ENCODE measurements at regions of chr16 and their contacts with region 1.

Region 1: DNA sequence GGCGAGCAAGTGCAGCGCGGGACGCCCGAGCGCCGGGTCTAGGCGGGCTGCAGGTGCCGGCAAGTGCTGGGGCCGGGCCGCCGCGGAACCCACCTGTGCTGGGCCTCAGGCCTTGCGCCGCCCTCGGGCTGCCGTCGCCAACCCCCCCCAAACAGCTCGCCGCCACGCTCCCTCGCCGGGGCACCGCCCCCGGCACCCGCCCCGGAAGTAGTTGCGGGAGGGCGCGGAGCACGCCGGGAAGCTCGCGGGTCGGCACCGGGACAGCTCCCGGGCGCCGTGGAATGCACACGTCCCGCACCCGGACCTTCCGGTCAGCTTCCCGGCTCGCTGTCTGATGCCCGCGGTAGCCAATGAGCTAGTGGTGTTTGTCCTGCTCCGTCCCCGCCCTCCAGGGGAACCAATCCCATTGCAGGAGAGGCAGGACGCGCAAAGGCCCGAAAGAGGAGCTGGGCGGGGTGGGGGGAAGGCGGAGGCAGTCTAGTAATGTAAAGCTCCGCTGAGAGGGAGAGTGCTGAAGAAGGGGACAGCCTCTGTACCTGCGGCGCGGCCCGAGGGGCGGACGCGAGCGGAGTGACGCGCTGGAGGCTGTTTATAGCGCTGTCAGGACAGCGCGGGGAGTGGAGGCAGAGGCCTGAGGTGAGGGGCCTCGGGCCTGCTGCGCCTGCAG is at the starts of genes ANKS3 and DNAAF8:
- DNase-seq: peak; percentile 88
- ATAC-seq: peak; percentile 82
- H3K4me3 Mint-ChIP-seq: peak within 1 kb of the TSS; percentile 86
- H3K27ac Mint-ChIP-seq: peak within 1 kb of the TSS; percentile 58
- H3K4me1 Mint-ChIP-seq: peaks cover 13% of the 10 kb centered on the region
- H3K27me3 Mint-ChIP-seq: no peaks in the 10 kb centered on the region
- total RNA-seq, gene ANKS3: 12.1 to 14.1 TPM
- total RNA-seq, gene DNAAF8: 0.11 to 0.16 TPM

Region 2: GRCh38 chr16:4208341-4208751 is 525.9 kb before region 1 on chr16:
- CTCF ChIA-PET with region 1: no interaction called
- POLR2A ChIA-PET with region 1: no interaction called
- intact Hi-C with region 1: no loop called
- DNase-seq: no peak
- ATAC-seq: no peak
- H3K4me3 Mint-ChIP-seq: no peak overlapping the region
- H3K27ac Mint-ChIP-seq: no peak overlapping the region
- H3K4me1 Mint-ChIP-seq: peaks cover 8% of the 10 kb centered on the region
- H3K27me3 Mint-ChIP-seq: no peaks in the 10 kb centered on the region

Region 3: GRCh38 chr16:4350787-4351659 is 383.2 kb before region 1 on chr16 and contains the start of gene PAM16:
- CTCF ChIA-PET with region 1: no interaction called
- POLR2A ChIA-PET with region 1: no interaction called
- intact Hi-C with region 1: loop called in 1 of 2 experiments (anchors 1 kb)
- DNase-seq: peak; percentile 99
- ATAC-seq: peak; percentile 96
- H3K4me3 Mint-ChIP-seq: peak within 1 kb of the TSS; percentile 89
- H3K27ac Mint-ChIP-seq: peak within 1 kb of the TSS; percentile 88
- H3K4me1 Mint-ChIP-seq: peaks cover 20% of the 10 kb centered on the region
- H3K27me3 Mint-ChIP-seq: no peaks in the 10 kb centered on the region
- total RNA-seq, gene PAM16: 62.8 to 67.8 TPM

Region 4: DNA sequence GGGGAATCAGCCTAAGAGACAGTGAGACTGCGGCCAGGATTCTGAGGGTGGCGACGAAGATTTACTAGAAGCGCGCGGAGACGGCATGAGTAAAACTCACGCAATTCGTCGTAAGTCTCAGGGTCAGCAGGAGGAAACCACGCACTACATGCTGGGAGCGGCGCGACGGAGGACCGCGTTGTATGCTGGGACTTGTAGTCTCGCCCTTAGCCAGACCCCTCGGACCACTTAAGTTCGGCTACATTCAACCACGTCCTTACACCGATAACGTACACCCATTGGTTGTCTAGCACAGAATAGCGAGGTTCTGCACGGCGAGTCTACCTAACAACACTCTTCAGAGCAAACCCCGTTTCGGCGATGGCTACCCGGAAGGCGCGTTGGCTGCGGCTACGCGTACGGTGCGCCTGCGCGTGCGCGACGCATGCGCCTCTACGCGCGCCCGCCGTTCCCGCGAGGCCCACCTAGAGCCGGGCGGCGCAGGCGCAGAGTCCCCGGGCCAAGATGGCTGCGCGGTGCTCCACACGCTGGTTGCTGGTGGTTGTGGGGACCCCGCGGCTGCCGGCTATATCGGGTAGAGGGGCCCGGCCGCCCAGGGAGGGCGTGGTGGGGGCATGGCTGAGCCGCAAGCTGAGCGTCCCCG is 308.7 kb before region 1 on chr16 and contains the start of gene DNAJA3:
- CTCF ChIA-PET with region 1: no interaction called
- POLR2A ChIA-PET with region 1: no interaction called
- intact Hi-C with region 1: loop called in 1 of 2 experiments (anchors 1 kb)
- DNase-seq: peak; percentile 96
- ATAC-seq: peak; percentile 93
- H3K4me3 Mint-ChIP-seq: peak within 1 kb of the TSS; percentile 95
- H3K27ac Mint-ChIP-seq: peak within 1 kb of the TSS; percentile 98
- H3K4me1 Mint-ChIP-seq: peaks cover 27% of the 10 kb centered on the region
- H3K27me3 Mint-ChIP-seq: no peaks in the 10 kb centered on the region
- total RNA-seq, gene DNAJA3: 93.9 to 102 TPM

Region 5: DNA sequence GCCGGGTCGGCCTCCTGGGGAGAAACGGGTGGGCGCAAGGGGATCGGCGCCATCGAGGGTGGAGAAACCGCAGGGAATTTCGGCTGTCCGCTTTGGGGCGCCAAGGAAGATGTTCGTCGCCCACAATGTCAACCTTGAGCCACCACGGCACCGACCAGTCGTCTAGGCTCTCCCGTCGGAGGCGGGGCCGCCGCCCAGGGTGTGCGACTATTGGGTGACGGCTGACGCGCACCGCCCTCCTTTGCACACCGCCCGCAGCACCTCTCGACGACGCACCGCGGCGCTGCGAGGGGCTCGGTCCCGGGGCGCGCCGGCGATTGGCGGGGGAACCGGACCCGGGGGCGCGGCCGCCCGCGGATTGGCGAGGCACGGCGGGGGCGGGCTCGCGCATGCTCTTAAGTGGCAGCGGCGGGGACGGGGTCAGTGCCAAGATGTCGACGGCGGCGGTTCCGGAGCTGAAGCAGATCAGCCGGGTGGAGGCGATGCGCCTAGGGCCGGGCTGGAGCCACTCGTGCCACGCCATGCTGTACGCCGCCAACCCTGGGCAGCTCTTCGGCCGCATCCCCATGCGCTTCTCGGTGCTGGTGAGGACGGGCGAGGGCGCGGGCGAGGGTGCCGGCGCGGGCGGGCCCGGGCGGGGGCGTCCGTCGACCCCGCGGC is 40.8 kb before region 1 on chr16 and contains the start of gene NUDT16L1:
- CTCF ChIA-PET with region 1: interaction called, 4 read pairs
- POLR2A ChIA-PET with region 1: interaction called, 10 read pairs
- intact Hi-C with region 1: loop called (anchors 1 kb)
- DNase-seq: peak; percentile 98
- ATAC-seq: peak; percentile 95
- H3K4me3 Mint-ChIP-seq: peak within 1 kb of the TSS; percentile 77
- H3K27ac Mint-ChIP-seq: peak within 1 kb of the TSS; percentile 83
- H3K4me1 Mint-ChIP-seq: peaks cover 17% of the 10 kb centered on the region
- H3K27me3 Mint-ChIP-seq: no peaks in the 10 kb centered on the region
- total RNA-seq, gene NUDT16L1: 16.4 to 22.5 TPM

Region 6: GRCh38 chr16:4802659-4803287 is 68.6 kb after region 1 on chr16:
- CTCF ChIA-PET with region 1: interaction called, 6 read pairs
- POLR2A ChIA-PET with region 1: interaction called, 10 read pairs
- intact Hi-C with region 1: loop called (anchors 1 to 2 kb)
- DNase-seq: peak; percentile 92
- ATAC-seq: peak; percentile 98
- H3K4me3 Mint-ChIP-seq: peak overlapping the region; percentile 74
- H3K27ac Mint-ChIP-seq: peak overlapping the region; percentile 58
- H3K4me1 Mint-ChIP-seq: peaks cover 14% of the 10 kb centered on the region
- H3K27me3 Mint-ChIP-seq: no peaks in the 10 kb centered on the region

Region 7: DNA sequence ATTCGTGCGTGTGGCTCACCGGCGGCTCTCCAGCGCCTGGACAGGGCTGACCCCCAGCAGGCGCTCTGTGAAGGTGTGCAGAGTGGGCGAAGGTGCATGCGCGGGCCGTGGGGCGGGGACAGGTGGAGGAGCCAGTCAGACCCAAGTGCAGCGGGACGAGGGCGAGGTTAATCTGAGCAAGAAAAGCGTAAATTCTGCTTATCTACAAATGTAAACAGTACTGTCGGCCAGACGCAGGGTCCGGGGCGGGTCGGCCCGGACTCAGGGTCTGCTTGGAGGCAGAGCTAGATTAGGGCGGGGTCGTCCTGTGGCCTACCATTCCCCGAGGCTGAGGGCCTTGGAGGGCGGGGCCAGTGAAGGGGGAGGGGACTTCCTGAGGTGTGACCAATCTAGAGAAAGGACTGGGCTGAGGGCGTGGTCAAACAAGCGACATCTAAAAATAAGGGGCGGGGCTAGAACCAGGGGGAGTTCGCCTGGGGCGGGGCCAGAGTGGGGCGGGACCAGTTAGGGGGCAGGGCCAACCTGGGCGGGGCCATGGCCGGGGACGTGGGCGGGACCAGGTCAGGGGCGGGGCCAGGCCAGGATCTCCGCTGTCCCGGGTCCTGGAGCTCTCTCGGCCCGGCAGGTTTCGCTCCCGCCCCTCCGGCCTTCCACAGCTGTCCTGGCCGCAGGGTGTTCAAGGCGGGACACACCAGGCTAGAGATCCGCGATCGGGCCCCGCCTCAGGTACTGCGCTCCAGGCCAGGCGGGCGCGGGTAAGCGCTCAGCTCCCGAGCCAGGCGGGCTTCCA is 223.7 kb after region 1 on chr16 and contains the start of gene SEC14L5:
- CTCF ChIA-PET with region 1: interaction called, 7 read pairs
- POLR2A ChIA-PET with region 1: no interaction called
- intact Hi-C with region 1: loop called (anchors 1 to 2 kb)
- DNase-seq: peak; percentile 98
- ATAC-seq: peak; percentile 95
- H3K4me3 Mint-ChIP-seq: peak within 1 kb of the TSS; percentile 75
- H3K27ac Mint-ChIP-seq: peak within 1 kb of the TSS; percentile 1
- H3K4me1 Mint-ChIP-seq: peaks cover 12% of the 10 kb centered on the region
- H3K27me3 Mint-ChIP-seq: peaks cover 33% of the 10 kb centered on the region
- total RNA-seq, gene SEC14L5: 0.09 to 0.28 TPM

Region 8: GRCh38 chr16:5071681-5072333 is 337.6 kb after region 1 on chr16 and contains the start of gene ALG1:
- CTCF ChIA-PET with region 1: no interaction called
- POLR2A ChIA-PET with region 1: no interaction called
- intact Hi-C with region 1: loop called in 1 of 2 experiments (anchors 1 kb)
- DNase-seq: peak; percentile 94
- ATAC-seq: peak; percentile 97
- H3K4me3 Mint-ChIP-seq: peak within 1 kb of the TSS; percentile 90
- H3K27ac Mint-ChIP-seq: peak within 1 kb of the TSS; percentile 90
- H3K4me1 Mint-ChIP-seq: peaks cover 21% of the 10 kb centered on the region
- H3K27me3 Mint-ChIP-seq: no peaks in the 10 kb centered on the region
- total RNA-seq, gene ALG1: 15.7 to 18.1 TPM